Left lung (tissue), 14 donors: ENCODE measurements at regions of chr7 and their contacts with region 1.

Region 1: GRCh38 chr7:83934118-83934734 is 260.4 kb downstream of the SEMA3A start:
- DNase-seq: no peak
- ATAC-seq: no peak
- H3K4me3 ChIP-seq: no peak overlapping the region
- H3K27ac ChIP-seq: no peak overlapping the region
- H3K4me1 ChIP-seq: peaks cover 0 to 10% of the 10 kb centered on the region in 2 donors
- H3K27me3 ChIP-seq: no peaks in the 10 kb centered on the region
- CTCF ChIP-seq: no peak

Region 2: GRCh38 chr7:83701736-83702135 is 232.5 kb before region 1 on chr7:
- intact Hi-C with region 1: no loop called
- DNase-seq: no peak
- ATAC-seq: no peak
- H3K4me3 ChIP-seq: no peak overlapping the region
- H3K27ac ChIP-seq: no peak overlapping the region
- H3K4me1 ChIP-seq: no peaks in the 10 kb centered on the region
- H3K27me3 ChIP-seq: no peaks in the 10 kb centered on the region
- CTCF ChIP-seq: no peak

Region 3: GRCh38 chr7:84981055-84981976 is 1047.1 kb after region 1 on chr7:
- intact Hi-C with region 1: loop called in 1 of 2 experiments (anchors 5 kb)
- DNase-seq: no peak
- ATAC-seq: no peak
- H3K4me3 ChIP-seq: no peak overlapping the region
- H3K27ac ChIP-seq: no peak overlapping the region
- H3K4me1 ChIP-seq: no peaks in the 10 kb centered on the region
- H3K27me3 ChIP-seq: no peaks in the 10 kb centered on the region
- CTCF ChIP-seq: no peak